ENCODE measurements at regions of chr16 and their contacts with region 1.

Region 1: DNA sequence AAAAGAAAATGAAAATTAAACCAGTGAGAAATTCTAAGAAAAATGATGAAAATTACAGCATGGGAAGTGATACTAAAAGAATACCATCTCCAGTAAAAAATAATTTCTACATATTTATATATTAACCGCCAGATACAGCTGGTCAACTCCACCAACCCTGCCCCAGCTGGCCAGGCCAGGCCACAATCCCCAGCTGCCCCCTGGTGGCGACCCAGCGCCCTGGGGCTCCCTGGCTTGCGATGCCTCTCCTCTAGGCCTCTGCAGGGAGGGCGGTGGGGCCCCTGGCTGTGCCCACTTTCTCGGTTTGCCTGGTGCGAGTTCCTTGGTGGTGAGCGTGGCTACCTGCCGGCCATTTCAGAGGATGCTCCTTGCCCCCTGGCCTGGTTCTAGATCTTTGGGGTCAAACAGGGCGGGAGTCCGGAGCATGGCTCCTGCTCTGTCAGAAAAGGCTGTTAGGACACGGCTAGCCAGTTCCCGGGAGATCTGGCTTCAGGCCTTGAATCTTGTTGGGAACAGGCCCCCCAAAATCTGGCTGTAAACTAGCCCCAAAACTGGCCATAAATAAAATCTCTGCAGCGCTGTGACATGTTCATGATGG is 14.5 kb downstream of the GLIS2 start:
- DNase-seq: peak; percentile 65 to 88
- H3K4me3 ChIP-seq: no peak overlapping the region
- H3K4me3 Mint-ChIP-seq: no peak overlapping the region
- H3K27ac Mint-ChIP-seq: no peak overlapping the region
- H3K4me1 ChIP-seq: no peaks in the 10 kb centered on the region
- H3K4me1 Mint-ChIP-seq: no peaks in the 10 kb centered on the region
- H3K27me3 ChIP-seq: no peaks in the 10 kb centered on the region
- H3K27me3 Mint-ChIP-seq: no peaks in the 10 kb centered on the region
- CTCF ChIP-seq: peak; percentile 84 to 97

Region 2: DNA sequence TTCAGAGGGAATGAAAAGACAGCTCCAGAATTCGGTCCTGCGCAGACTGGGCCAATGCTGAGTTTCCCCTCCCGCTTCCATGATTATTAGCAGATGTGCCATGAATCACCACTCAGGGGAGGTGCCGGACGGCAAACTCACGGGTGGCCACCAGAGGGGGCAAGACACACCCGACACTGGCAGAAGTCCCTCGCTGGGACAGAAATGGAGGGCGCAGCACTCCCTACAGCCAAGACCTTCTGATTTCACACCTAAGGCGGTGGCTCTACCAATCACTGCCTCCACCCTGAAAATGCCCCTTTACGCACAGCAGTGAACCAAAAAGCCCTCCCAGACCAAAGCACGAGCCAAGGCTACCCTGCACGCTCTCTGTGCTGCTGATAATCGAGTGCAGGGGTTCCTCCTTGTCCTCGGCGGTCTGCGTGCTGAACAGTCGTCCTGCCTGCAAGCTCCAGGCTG is 639.9 kb before region 1 on chr16:
- CTCF ChIA-PET with region 1: interaction called, 10 read pairs
- POLR2A ChIA-PET with region 1: no interaction called
- intact Hi-C with region 1: no loop called
- DNase-seq: peak; percentile 82 to 86
- H3K4me3 ChIP-seq: no peak overlapping the region
- H3K4me3 Mint-ChIP-seq: no peak overlapping the region
- H3K27ac Mint-ChIP-seq: peak overlapping the region; percentile 55
- H3K4me1 ChIP-seq: no peaks in the 10 kb centered on the region
- H3K4me1 Mint-ChIP-seq: peaks cover 3% of the 10 kb centered on the region
- H3K27me3 ChIP-seq: no peaks in the 10 kb centered on the region
- H3K27me3 Mint-ChIP-seq: no peaks in the 10 kb centered on the region
- CTCF ChIP-seq: peak; percentile 80 to 85

Region 3: DNA sequence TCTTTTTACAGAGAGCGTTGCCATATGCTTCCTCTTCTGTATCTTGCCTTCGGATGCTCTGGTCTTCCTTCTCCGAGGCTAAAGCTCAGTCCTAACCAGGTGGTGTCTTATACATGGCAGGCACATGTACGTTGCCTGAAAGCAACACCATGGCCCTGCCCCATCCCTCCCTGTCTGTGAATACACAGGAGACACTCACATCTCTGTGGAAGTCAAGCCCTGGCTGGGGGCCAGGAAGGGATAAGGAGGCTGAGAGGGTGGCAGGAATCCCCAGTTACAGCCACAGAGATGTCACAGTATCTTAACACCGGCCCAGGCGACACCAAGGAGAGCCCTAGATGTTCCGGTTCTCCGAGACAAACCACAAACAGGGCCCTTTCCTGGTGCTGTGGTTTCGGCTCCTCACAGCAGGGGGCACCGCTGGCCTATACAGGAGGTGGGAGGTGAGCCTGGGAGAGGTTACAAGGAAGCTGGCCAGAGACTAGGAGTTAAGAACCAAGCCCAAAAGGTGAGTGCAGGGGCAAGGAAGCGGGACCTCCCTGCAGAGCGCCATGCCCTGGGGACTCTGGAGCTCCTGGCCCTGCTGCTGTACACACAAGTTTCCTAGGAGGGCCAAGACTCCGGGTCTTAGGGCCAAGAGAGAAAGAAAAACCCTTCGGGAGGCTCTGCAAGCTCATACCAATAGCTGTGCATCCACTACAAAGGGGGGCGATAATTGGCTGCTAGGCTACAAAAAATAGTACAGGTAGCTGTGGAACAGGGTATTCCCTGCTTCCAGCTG is 130.2 kb before region 1 on chr16:
- CTCF ChIA-PET with region 1: interaction called, 11 read pairs
- POLR2A ChIA-PET with region 1: no interaction called
- intact Hi-C with region 1: loop called (anchors 1 kb)
- DNase-seq: peak; percentile 73 to 78
- H3K4me3 ChIP-seq: no peak overlapping the region
- H3K4me3 Mint-ChIP-seq: no peak overlapping the region
- H3K27ac Mint-ChIP-seq: peak overlapping the region; percentile 25
- H3K4me1 ChIP-seq: no peaks in the 10 kb centered on the region
- H3K4me1 Mint-ChIP-seq: no peaks in the 10 kb centered on the region
- H3K27me3 ChIP-seq: no peaks in the 10 kb centered on the region
- H3K27me3 Mint-ChIP-seq: no peaks in the 10 kb centered on the region
- CTCF ChIP-seq: peak; percentile 64 to 88

Region 4: DNA sequence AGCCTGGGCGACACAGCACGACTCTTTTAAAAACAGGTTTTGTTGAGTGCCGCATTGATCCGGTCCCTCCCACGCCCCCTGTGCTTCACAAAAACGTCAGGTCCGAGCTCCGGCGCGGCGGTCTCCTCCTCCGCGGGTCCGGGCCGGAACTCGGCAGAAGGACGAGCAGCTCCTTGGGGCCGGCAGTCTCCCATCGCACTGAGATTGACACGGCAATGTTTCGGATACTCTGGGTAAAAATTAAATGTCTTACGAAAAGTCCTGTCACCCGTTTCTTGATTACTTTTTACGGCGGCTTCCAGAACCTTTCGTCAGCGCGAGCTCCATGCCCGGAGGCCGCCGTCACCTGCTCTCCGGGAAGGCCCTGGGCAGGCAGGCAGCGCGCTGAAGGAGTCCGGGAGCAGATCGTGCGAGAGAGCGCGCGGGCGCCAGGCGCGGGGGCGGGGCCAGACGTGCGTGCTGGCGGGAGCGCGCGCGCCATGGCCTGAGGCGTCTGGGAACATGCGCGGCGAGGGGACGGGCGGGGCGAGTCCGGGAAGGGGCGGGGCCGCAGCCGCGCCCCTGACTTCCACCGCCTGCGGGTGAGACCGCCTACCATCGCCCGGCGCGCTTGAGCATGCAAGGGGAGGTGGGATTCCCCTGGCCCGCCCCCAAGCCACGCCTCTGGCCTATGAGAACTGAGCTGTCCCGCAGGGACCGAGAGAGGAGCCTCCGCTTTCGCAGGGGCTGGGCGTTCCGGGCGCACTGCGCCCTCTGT is 76.8 kb before region 1 on chr16:
- CTCF ChIA-PET with region 1: interaction called, 11 read pairs
- POLR2A ChIA-PET with region 1: interaction called, 3 read pairs
- intact Hi-C with region 1: loop called (anchors 1 kb)
- DNase-seq: peak; percentile 98 to 99
- H3K4me3 ChIP-seq: peak overlapping the region; percentile 56
- H3K4me3 Mint-ChIP-seq: peak overlapping the region; percentile 90
- H3K27ac Mint-ChIP-seq: peak overlapping the region; percentile 96
- H3K4me1 ChIP-seq: no peaks in the 10 kb centered on the region
- H3K4me1 Mint-ChIP-seq: no peaks in the 10 kb centered on the region
- H3K27me3 ChIP-seq: no peaks in the 10 kb centered on the region
- H3K27me3 Mint-ChIP-seq: no peaks in the 10 kb centered on the region
- CTCF ChIP-seq: no peak

Region 5: GRCh38 chr16:4264546-4264945 is 65.8 kb before region 1 on chr16:
- CTCF ChIA-PET with region 1: interaction called, 3 read pairs
- POLR2A ChIA-PET with region 1: interaction called, 11 read pairs
- intact Hi-C with region 1: no loop called
- DNase-seq: no peak
- H3K4me3 ChIP-seq: no peak overlapping the region
- H3K4me3 Mint-ChIP-seq: no peak overlapping the region
- H3K27ac Mint-ChIP-seq: no peak overlapping the region
- H3K4me1 ChIP-seq: no peaks in the 10 kb centered on the region
- H3K4me1 Mint-ChIP-seq: no peaks in the 10 kb centered on the region
- H3K27me3 ChIP-seq: no peaks in the 10 kb centered on the region
- H3K27me3 Mint-ChIP-seq: no peaks in the 10 kb centered on the region
- CTCF ChIP-seq: no peak

Region 6: DNA sequence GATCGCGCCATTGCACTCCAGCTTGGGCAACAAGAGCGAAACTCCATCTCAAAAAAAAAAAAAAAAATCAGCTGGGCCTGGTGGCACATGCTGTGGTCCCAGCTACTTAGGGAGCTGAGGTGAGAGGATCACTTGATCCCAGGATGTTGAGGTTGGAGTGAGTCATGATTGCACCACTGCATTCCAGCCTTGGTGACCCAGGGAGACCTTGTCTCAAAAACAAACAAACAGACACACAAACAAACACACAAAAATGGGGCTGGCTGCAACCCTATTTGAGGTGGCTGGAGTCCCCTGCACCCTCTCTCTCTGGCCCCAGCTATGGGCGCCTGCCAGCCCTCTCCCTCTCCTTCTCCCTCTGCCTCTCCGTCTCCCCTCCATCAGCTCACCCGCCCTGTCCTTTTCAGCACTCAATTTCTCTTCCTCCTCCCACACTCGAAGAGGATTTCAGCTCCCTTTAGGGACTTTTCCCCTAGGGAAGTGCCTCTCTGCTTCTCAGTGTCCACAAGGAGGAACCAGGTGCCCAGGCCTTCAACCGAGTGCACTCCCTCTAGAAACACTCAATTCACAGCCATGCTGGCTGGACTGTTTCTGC is 40.0 kb before region 1 on chr16:
- CTCF ChIA-PET with region 1: interaction called, 5 read pairs
- POLR2A ChIA-PET with region 1: no interaction called
- intact Hi-C with region 1: loop called (anchors 2 kb)
- DNase-seq: peak; percentile 53 to 63
- H3K4me3 ChIP-seq: no peak overlapping the region
- H3K4me3 Mint-ChIP-seq: no peak overlapping the region
- H3K27ac Mint-ChIP-seq: peak overlapping the region; percentile 82
- H3K4me1 ChIP-seq: peaks cover 4% of the 10 kb centered on the region
- H3K4me1 Mint-ChIP-seq: peaks cover 19% of the 10 kb centered on the region
- H3K27me3 ChIP-seq: no peaks in the 10 kb centered on the region
- H3K27me3 Mint-ChIP-seq: no peaks in the 10 kb centered on the region
- CTCF ChIP-seq: peak in 1 of 2 experiments; percentile 31

Region 7: DNA sequence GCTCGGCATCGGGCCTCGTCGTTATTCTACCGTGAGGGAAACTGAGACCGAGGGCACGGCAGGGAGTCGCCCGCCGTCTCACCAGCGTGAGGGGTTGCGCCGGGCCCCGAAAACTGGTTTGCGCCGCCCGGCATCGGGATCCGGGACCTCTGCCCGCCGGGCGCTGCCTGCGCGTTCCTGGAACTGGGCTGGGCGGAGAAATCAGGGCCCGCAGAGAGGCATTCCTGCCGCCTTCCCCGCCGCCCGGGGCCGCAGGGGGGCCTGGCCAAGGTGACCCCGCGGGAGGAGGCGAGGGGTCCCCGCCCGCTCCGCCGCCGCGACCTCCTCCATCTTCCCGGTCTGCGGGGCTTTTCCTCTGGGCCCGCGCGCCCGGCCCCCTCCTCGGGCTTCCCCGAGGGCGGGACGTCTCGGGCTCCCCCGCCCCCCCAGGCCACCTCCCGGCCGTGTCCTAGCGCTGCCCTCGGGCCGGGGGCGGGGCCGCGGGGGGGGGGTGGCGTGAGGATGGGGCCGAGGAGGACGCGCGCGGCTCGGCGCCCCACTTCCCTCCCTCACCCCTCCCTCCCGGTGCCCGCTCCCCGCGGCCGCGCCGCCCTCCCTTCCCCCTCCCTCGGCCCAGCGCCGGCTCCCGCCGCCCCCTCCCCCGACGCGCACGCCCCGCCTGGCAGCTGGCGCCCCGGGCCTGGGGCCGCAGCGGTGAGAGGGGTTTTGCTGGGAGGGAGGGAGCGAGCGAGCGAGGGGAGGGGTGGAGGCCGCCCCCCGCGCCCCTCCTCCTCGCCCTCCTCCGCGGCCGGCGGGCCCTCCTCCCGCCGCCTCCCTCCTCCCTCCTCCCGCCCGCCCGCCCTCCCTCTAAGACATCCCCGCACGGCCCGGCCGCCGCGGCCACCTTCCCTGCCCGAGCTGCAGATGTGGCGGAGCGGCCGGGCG is 14.9 kb before region 1 on chr16 and contains the start of gene GLIS2:
- CTCF ChIA-PET with region 1: interaction called, 5 read pairs
- POLR2A ChIA-PET with region 1: no interaction called
- intact Hi-C with region 1: loop called (anchors 2 kb)
- DNase-seq: peak; percentile 82 to 87
- H3K4me3 ChIP-seq: peak within 1 kb of the TSS; percentile 83
- H3K4me3 Mint-ChIP-seq: peak within 1 kb of the TSS; percentile 97
- H3K27ac Mint-ChIP-seq: peak within 1 kb of the TSS; percentile 99
- H3K4me1 ChIP-seq: peaks cover 36% of the 10 kb centered on the region
- H3K4me1 Mint-ChIP-seq: peaks cover 12% of the 10 kb centered on the region
- H3K27me3 ChIP-seq: no peaks in the 10 kb centered on the region
- H3K27me3 Mint-ChIP-seq: no peaks in the 10 kb centered on the region
- CTCF ChIP-seq: no peak
- total RNA-seq, gene GLIS2: 12.3 and 13.1 TPM in 2 replicates

Region 8: DNA sequence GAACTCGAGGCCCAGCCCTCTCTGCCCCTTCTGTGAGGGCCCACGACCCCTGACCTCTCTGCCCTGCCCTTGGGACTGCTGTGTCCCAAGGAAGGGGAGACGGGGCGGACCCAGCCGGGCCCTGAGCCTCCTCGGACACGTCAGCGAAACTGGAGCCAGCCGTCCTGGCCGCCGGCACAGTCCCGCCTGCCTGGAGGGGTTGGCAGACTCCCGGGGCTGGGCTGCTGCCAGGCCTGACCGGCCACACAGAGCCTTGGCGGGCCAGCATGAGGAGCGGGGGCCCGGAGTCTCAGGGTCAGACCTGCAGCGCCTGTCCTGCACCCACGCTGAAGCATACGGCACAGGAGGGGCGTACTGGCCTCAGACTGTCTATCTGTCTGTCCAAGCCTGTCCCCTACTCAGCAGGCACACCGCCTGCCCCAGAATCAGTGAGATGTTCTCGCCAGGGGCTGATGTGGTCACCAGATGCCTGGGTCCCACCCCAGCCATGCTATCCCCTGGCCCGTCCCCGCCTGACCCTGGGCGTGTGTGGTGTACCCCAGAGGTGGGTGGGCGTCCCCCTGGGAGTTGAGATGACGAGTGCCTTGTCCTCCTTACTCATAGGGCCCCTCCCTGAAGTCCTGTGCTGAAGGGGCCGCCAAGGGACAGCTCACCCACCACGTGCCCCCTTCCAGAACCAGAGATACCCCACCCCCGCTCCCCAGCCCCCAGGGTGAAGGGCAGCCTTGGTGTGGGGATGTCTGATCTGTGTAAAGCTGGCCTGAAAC is 45.9 kb after region 1 on chr16:
- CTCF ChIA-PET with region 1: no interaction called
- POLR2A ChIA-PET with region 1: no interaction called
- intact Hi-C with region 1: no loop called
- DNase-seq: no peak
- H3K4me3 ChIP-seq: no peak overlapping the region
- H3K4me3 Mint-ChIP-seq: no peak overlapping the region
- H3K27ac Mint-ChIP-seq: no peak overlapping the region
- H3K4me1 ChIP-seq: peaks cover 37% of the 10 kb centered on the region
- H3K4me1 Mint-ChIP-seq: no peaks in the 10 kb centered on the region
- H3K27me3 ChIP-seq: no peaks in the 10 kb centered on the region
- H3K27me3 Mint-ChIP-seq: no peaks in the 10 kb centered on the region
- CTCF ChIP-seq: no peak

Region 9: DNA sequence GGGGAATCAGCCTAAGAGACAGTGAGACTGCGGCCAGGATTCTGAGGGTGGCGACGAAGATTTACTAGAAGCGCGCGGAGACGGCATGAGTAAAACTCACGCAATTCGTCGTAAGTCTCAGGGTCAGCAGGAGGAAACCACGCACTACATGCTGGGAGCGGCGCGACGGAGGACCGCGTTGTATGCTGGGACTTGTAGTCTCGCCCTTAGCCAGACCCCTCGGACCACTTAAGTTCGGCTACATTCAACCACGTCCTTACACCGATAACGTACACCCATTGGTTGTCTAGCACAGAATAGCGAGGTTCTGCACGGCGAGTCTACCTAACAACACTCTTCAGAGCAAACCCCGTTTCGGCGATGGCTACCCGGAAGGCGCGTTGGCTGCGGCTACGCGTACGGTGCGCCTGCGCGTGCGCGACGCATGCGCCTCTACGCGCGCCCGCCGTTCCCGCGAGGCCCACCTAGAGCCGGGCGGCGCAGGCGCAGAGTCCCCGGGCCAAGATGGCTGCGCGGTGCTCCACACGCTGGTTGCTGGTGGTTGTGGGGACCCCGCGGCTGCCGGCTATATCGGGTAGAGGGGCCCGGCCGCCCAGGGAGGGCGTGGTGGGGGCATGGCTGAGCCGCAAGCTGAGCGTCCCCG is 95.1 kb after region 1 on chr16 and contains the start of gene DNAJA3:
- CTCF ChIA-PET with region 1: no interaction called
- POLR2A ChIA-PET with region 1: no interaction called
- intact Hi-C with region 1: no loop called
- DNase-seq: peak; percentile 89 to 91
- H3K4me3 ChIP-seq: peak within 1 kb of the TSS; percentile 50
- H3K4me3 Mint-ChIP-seq: peak within 1 kb of the TSS; percentile 94
- H3K27ac Mint-ChIP-seq: peak within 1 kb of the TSS; percentile 99
- H3K4me1 ChIP-seq: peaks cover 9% of the 10 kb centered on the region; the same call in 1 of the 2 replicates
- H3K4me1 Mint-ChIP-seq: peaks cover 6% of the 10 kb centered on the region
- H3K27me3 ChIP-seq: no peaks in the 10 kb centered on the region
- H3K27me3 Mint-ChIP-seq: no peaks in the 10 kb centered on the region
- CTCF ChIP-seq: no peak
- total RNA-seq, gene DNAJA3: 77.1 and 79.6 TPM in 2 replicates

Region 10: GRCh38 chr16:4461250-4462085 is 131.1 kb after region 1 on chr16:
- CTCF ChIA-PET with region 1: no interaction called
- POLR2A ChIA-PET with region 1: no interaction called
- intact Hi-C with region 1: no loop called
- DNase-seq: no peak
- H3K4me3 ChIP-seq: no peak overlapping the region
- H3K4me3 Mint-ChIP-seq: no peak overlapping the region
- H3K27ac Mint-ChIP-seq: no peak overlapping the region
- H3K4me1 ChIP-seq: peaks cover 4% of the 10 kb centered on the region; the same call in 1 of the 2 replicates
- H3K4me1 Mint-ChIP-seq: peaks cover 4% of the 10 kb centered on the region
- H3K27me3 ChIP-seq: no peaks in the 10 kb centered on the region
- H3K27me3 Mint-ChIP-seq: no peaks in the 10 kb centered on the region
- CTCF ChIP-seq: no peak

Region 11: GRCh38 chr16:4616047-4616811 is 285.9 kb after region 1 on chr16:
- CTCF ChIA-PET with region 1: no interaction called
- POLR2A ChIA-PET with region 1: no interaction called
- intact Hi-C with region 1: no loop called
- DNase-seq: peak; percentile 98 to 100
- H3K4me3 ChIP-seq: peak overlapping the region; percentile 42
- H3K4me3 Mint-ChIP-seq: peak overlapping the region; percentile 94
- H3K27ac Mint-ChIP-seq: peak overlapping the region; percentile 100
- H3K4me1 ChIP-seq: peaks cover 42% of the 10 kb centered on the region
- H3K4me1 Mint-ChIP-seq: peaks cover 7% of the 10 kb centered on the region
- H3K27me3 ChIP-seq: no peaks in the 10 kb centered on the region
- H3K27me3 Mint-ChIP-seq: no peaks in the 10 kb centered on the region
- CTCF ChIP-seq: peak; percentile 33 to 63

Measured in Caco-2 (cell line).